PC-9 (cell line): ENCODE measurements at regions of chr15 and their contacts with region 1.

Region 1: DNA sequence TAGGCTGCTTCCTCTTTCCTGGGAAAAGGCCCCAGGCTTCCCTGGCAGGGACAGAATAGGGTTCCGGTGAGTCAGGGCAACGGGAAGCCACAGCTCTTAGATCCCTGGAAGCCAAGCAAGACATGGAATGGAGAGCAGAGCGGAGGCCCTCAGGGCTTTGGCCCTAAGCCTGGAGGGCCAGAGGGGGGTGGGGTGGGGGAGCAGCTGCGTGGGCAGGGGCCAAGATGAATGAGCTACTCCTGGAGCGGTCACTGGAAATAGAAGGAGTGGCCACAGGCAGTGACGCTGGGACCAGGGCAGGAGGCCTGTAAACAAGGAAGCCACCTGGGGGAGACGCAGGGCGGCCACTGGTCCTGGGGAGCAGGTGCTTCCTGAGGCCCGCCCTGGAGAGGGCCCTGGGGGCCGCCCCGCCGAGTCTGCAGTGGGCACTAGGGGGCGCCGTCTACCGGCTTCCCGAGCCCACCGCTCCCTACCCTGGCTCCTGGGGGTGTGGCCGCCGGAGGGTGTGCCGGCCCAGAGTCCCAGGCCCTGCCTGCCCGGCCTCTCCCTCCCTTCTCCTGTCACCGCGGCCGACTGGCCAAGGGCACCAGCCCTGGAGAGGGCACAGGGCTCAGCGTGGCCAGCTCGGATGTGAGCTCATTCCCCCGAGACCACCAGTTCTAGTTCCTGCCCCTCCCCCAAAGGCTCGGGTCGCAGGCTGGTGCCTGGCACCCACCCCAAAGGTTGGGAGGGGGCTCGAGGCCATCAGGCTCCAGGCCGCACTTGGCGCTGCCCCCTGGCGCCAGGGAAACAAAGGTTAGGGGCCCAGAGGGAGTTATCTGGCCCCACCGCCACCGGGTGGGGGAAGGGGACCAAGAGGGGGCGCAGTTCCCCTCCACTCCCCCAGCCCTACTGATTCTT is 12.1 kb downstream of the VPS18 start:
- DNase-seq: peak; percentile 86 to 98
- H3K4me3 ChIP-seq: peak overlapping the region; percentile 46; the same call in 1 of the 2 replicates
- H3K27ac ChIP-seq: peak overlapping the region; percentile 83
- H3K4me1 ChIP-seq: peaks cover 18% of the 10 kb centered on the region
- H3K27me3 ChIP-seq: no peaks in the 10 kb centered on the region
- CTCF ChIP-seq: peak; percentile 73

Region 2: DNA sequence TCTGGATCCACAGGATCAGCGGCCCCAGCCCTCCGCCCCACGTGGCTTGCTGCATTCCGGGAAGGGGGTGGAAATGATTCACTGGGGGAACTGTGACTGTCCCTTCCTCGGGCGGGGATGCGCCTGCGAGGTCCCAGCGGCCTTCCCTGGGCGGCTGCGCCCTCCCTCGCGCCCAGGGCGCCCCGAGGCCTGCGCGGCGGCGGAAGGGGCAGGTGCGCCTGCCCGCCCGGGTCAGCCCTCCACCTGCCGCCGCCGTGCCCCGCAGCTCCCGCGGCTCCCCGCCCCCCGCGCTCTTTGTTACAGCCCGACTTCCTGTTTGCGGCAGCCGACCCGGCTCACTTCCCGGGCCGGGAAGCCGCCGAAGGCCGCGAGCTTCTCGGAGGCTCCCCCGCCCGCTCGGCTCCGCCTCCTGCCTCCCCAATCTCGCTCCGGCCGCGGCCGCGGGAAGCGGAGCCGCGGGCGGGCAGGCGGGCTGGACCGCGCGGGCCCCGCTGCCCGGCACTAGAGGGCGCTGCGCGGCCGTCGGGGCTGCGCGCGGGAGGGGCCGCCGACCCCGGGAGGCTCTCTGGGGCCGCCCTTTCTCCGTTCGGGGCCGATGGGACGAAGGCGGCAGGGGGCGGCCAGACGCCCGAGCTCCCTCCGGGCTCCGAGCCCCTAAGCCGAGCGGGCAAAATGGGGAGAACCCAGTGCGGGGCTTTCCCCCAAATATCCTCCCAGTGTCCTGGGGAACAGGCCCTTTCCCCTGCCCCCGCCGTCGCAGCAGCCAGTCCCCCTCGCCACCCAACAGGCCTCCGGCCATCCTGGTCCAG is 35.4 kb after region 1 on chr15:
- CTCF ChIA-PET with region 1: interaction called, 6 read pairs
- POLR2A ChIA-PET with region 1: no interaction called
- intact Hi-C with region 1: loop called (anchors 1 kb)
- DNase-seq: peak; percentile 55 to 82
- H3K4me3 ChIP-seq: peak overlapping the region; percentile 64; the same call in 1 of the 2 replicates
- H3K27ac ChIP-seq: peak overlapping the region; percentile 32; the same call in 1 of the 2 replicates
- H3K4me1 ChIP-seq: 0 out of 2 replicates have a peak, but pooled peaks cover 6% of the 10 kb centered on the region
- H3K27me3 ChIP-seq: no peaks in the 10 kb centered on the region
- CTCF ChIP-seq: peak; percentile 36; the same call in 1 of the 2 replicates

Region 3: GRCh38 chr15:41116116-41116871 is 210.0 kb after region 1 on chr15 and contains the start of gene INO80:
- CTCF ChIA-PET with region 1: no interaction called
- POLR2A ChIA-PET with region 1: interaction called, 15 read pairs
- intact Hi-C with region 1: loop called (anchors 1 kb)
- DNase-seq: peak; percentile 91 to 96
- H3K4me3 ChIP-seq: peak within 1 kb of the TSS; percentile 90
- H3K27ac ChIP-seq: peak within 1 kb of the TSS; percentile 98
- H3K4me1 ChIP-seq: peaks cover 6% of the 10 kb centered on the region; the same call in 1 of the 2 replicates
- H3K27me3 ChIP-seq: no peaks in the 10 kb centered on the region
- CTCF ChIP-seq: no peak
- total RNA-seq, gene INO80: 11.3 and 18.8 TPM in 2 replicates

Region 4: DNA sequence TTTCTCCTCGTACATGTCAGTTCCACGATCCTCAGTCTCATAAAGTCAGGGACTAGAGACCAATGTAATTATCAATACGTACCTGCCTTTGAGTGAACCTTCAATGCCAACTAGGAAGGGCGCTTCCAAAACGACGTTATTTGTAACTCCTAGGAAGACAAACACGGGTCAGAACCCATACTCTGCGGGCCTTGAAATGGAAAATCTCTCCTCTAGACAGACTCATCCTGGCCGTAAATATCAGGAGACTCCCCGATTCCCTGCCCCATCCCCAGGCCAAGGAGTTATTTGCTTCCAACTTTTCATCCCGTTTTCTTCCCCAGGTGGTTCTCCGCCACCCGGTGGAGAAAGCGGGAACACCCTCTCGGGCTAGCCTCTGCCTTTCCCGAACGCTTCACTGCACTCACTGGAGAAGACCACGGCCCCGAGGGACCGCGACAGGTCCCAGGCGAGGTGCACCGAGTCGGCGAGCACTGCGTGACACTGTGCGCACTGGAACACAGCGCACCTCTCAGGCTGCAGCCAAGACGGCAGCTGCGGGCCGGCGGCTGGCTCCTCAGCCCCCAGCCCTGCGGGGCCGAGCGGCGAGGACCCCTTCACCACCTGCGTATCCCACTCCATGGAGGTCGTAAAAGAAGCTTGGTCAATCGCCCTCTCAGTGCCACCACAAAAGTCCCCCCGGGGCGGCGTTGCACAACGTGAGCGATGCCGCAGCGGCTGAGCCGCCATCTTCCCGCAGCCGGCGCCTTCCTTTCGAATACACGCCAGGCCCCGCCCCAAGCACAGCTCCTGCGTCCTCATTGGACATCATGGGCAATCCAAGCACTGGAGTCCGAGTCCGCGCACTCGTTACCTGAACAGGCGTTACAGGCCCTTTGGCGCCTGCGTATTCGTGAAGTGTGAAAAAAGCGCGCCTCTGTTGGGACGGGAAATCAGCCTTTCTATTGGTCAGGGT is 425.8 kb after region 1 on chr15 and contains the start of gene OIP5:
- CTCF ChIA-PET with region 1: interaction called, 6 read pairs
- POLR2A ChIA-PET with region 1: no interaction called
- intact Hi-C with region 1: loop called (anchors 1 kb)
- DNase-seq: peak; percentile 97 to 98
- H3K4me3 ChIP-seq: peak within 1 kb of the TSS; percentile 85
- H3K27ac ChIP-seq: peak within 1 kb of the TSS; percentile 58
- H3K4me1 ChIP-seq: peaks cover 22% of the 10 kb centered on the region; the same call in 1 of the 2 replicates
- H3K27me3 ChIP-seq: no peaks in the 10 kb centered on the region
- CTCF ChIP-seq: peak; percentile 73
- total RNA-seq, gene OIP5: 23.9 and 25.4 TPM in 2 replicates

Region 5: GRCh38 chr15:41688671-41689070 is 782.3 kb after region 1 on chr15:
- CTCF ChIA-PET with region 1: no interaction called
- POLR2A ChIA-PET with region 1: no interaction called
- intact Hi-C with region 1: no loop called
- DNase-seq: no peak
- H3K4me3 ChIP-seq: no peak overlapping the region
- H3K27ac ChIP-seq: no peak overlapping the region
- H3K4me1 ChIP-seq: no peaks in the 10 kb centered on the region
- H3K27me3 ChIP-seq: no peaks in the 10 kb centered on the region
- CTCF ChIP-seq: no peak

Region 6: GRCh38 chr15:42137431-42138261 is 1231.3 kb after region 1 on chr15:
- CTCF ChIA-PET with region 1: no interaction called
- POLR2A ChIA-PET with region 1: no interaction called
- intact Hi-C with region 1: loop called (anchors 10 kb)
- DNase-seq: no peak
- H3K4me3 ChIP-seq: no peak overlapping the region
- H3K27ac ChIP-seq: no peak overlapping the region
- H3K4me1 ChIP-seq: 0 out of 2 replicates have a peak, but pooled peaks cover under 1% of the 10 kb centered on the region
- H3K27me3 ChIP-seq: no peaks in the 10 kb centered on the region
- CTCF ChIP-seq: peak; percentile 70